ENCODE measurements at regions of chr1 and their contacts with region 1.

Region 1: DNA sequence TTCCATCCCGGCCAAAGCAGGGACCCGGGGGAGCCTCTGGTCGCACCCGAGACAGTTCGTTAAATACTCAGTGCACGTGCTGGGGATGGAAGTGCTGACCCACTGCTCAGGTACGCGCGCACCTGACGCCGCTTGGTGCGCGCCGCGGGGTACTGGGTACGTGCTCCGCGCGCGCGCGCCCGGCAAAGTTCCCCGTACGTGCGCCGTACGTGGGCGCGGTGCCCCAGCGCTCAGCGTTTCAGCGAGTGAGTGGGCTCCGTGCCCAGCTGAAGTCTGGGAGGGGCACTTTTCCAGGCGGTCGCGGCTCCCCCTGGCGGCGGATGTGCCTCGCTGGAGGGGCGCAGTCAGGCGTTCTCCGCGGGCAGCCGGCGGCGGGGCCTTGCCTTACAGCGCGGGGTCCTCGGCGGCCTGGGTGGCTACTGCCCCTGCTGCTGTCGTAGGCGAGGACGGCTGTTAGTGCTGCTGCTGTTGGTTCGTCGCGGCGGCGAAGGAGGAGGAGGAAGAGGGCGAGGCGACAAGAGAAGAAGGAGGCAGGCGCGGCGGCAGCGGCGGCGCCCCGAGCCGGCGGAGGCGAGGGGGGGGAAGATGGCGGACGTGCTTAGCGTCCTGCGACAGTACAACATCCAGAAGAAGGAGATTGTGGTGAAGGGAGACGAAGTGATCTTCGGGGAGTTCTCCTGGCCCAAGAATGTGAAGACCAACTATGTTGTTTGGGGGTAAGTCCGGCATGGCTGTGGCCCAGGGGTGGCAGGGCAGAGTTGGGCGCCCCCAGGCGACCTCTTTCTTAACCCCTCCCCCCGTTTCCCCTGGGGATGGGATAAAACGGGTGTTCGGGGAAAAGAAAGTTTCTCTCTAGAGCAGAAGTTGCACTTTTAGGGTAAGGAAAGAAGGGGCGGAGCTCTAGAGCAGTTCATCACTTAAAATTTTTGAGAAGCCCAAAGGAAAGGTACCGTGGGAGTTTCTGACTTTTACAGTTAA is at the start of gene CDC73:
- DNase-seq: peak; percentile 99
- ATAC-seq: peak; percentile 90
- H3K4me3 Mint-ChIP-seq: peak within 1 kb of the TSS; percentile 93
- H3K27ac Mint-ChIP-seq: peak within 1 kb of the TSS; percentile 94
- H3K4me1 Mint-ChIP-seq: peaks cover 43% of the 10 kb centered on the region
- H3K27me3 Mint-ChIP-seq: no peaks in the 10 kb centered on the region
- CTCF ChIP-seq: peak; percentile 17
- total RNA-seq, gene CDC73: 55.9 and 59.1 TPM in 2 replicates

Region 2: GRCh38 chr1:193069748-193070385 is 52.0 kb before region 1 on chr1:
- CTCF ChIA-PET with region 1: interaction called, 6 read pairs
- POLR2A ChIA-PET with region 1: interaction called, 4 read pairs
- intact Hi-C with region 1: loop called (anchors 2 kb)
- DNase-seq: no peak
- ATAC-seq: peak; percentile 25
- H3K4me3 Mint-ChIP-seq: no peak overlapping the region
- H3K27ac Mint-ChIP-seq: peak overlapping the region; percentile 65
- H3K4me1 Mint-ChIP-seq: peaks cover 45% of the 10 kb centered on the region
- H3K27me3 Mint-ChIP-seq: no peaks in the 10 kb centered on the region
- CTCF ChIP-seq: no peak

Region 3: GRCh38 chr1:193104906-193105820 is 16.7 kb before region 1 on chr1 and contains the start of gene GLRX2:
- CTCF ChIA-PET with region 1: interaction called, 4 read pairs
- POLR2A ChIA-PET with region 1: interaction called, 42 read pairs
- intact Hi-C with region 1: loop called (anchors 1 kb)
- DNase-seq: peak; percentile 50
- ATAC-seq: peak; percentile 85
- H3K4me3 Mint-ChIP-seq: peak within 1 kb of the TSS; percentile 93
- H3K27ac Mint-ChIP-seq: peak within 1 kb of the TSS; percentile 76
- H3K4me1 Mint-ChIP-seq: peaks cover 18% of the 10 kb centered on the region
- H3K27me3 Mint-ChIP-seq: no peaks in the 10 kb centered on the region
- CTCF ChIP-seq: no peak
- total RNA-seq, gene GLRX2: 10.9 and 14.4 TPM in 2 replicates